Activated CD4-positive, alpha-beta T cell treated with anti-CD3 and anti-CD28 coated beads for 36 hours (primary cell): ENCODE measurements at regions of chr7 and their contacts with region 1.

Region 1: GRCh38 chr7:40232242-40232893 is 97.6 kb downstream of the SUGCT start:
- DNase-seq: peak; percentile 11
- ATAC-seq: no peak
- H3K4me3 Mint-ChIP-seq: no peak overlapping the region
- H3K27ac Mint-ChIP-seq: no peak overlapping the region
- H3K4me1 Mint-ChIP-seq: peaks cover 5% of the 10 kb centered on the region
- H3K27me3 Mint-ChIP-seq: no peaks in the 10 kb centered on the region

Region 2: GRCh38 chr7:39054731-39055130 is 1177.6 kb before region 1 on chr7:
- CTCF ChIA-PET with region 1: no interaction called
- POLR2A ChIA-PET with region 1: no interaction called
- intact Hi-C with region 1: no loop called
- DNase-seq: no peak
- ATAC-seq: no peak
- H3K4me3 Mint-ChIP-seq: no peak overlapping the region
- H3K27ac Mint-ChIP-seq: no peak overlapping the region
- H3K4me1 Mint-ChIP-seq: no peaks in the 10 kb centered on the region
- H3K27me3 Mint-ChIP-seq: peaks cover 5% of the 10 kb centered on the region

Region 3: GRCh38 chr7:40279991-40280390 is 47.6 kb after region 1 on chr7:
- CTCF ChIA-PET with region 1: interaction called, 3 read pairs
- POLR2A ChIA-PET with region 1: interaction called, 12 read pairs
- intact Hi-C with region 1: no loop called
- DNase-seq: no peak
- ATAC-seq: no peak
- H3K4me3 Mint-ChIP-seq: no peak overlapping the region
- H3K27ac Mint-ChIP-seq: no peak overlapping the region
- H3K4me1 Mint-ChIP-seq: no peaks in the 10 kb centered on the region
- H3K27me3 Mint-ChIP-seq: no peaks in the 10 kb centered on the region

Region 4: GRCh38 chr7:40311307-40311706 is 78.9 kb after region 1 on chr7:
- CTCF ChIA-PET with region 1: no interaction called
- POLR2A ChIA-PET with region 1: no interaction called
- intact Hi-C with region 1: no loop called
- DNase-seq: peak; percentile 6
- ATAC-seq: peak; percentile 76
- H3K4me3 Mint-ChIP-seq: no peak overlapping the region
- H3K27ac Mint-ChIP-seq: no peak overlapping the region
- H3K4me1 Mint-ChIP-seq: peaks cover 7% of the 10 kb centered on the region
- H3K27me3 Mint-ChIP-seq: no peaks in the 10 kb centered on the region

Region 5: DNA sequence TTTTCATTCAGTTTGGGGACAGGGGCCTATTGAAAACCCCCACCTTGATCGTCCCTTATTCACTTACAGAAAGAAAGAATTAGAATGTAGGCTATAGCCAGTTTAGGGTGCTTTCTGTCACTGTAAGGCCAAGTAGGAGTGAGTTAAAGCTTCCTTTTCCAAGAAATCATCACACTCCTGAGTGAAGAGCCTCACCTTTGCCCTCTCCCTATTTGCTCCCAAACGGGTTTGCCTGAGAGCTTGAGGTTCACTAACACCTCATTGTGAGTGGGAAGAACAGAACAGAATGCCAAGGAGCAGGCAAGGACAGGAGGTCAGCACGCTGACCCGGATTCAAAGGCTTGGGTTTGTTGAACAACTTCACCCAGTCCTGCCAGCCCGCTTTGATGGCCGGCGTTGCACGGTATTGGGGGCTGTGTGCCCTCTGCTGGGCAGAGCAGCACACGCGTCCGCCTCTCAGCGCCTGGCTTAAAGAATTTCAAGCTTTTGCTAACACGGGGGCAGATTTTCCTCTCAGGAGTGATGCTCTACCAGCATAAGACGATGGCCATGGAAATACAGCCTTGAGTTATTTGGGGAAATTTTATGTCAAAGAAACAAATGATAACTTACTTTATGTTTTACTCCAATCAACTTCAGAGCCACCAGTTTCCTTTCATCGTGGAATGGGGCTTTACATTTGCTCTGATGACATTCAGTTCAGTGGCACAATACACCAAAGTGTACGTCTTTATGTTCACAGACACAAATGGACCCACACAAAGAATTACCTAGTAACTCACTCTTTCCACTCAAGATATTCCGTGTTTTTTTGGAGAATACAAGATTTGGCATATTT is 372.5 kb after region 1 on chr7:
- CTCF ChIA-PET with region 1: interaction called, 6 read pairs
- POLR2A ChIA-PET with region 1: no interaction called
- intact Hi-C with region 1: loop called (anchors 1 to 5 kb)
- DNase-seq: peak; percentile 56
- ATAC-seq: peak; percentile 53
- H3K4me3 Mint-ChIP-seq: no peak overlapping the region
- H3K27ac Mint-ChIP-seq: no peak overlapping the region
- H3K4me1 Mint-ChIP-seq: peaks cover 3% of the 10 kb centered on the region
- H3K27me3 Mint-ChIP-seq: no peaks in the 10 kb centered on the region

Region 6: GRCh38 chr7:40658729-40659128 is 426.4 kb after region 1 on chr7:
- CTCF ChIA-PET with region 1: no interaction called
- POLR2A ChIA-PET with region 1: no interaction called
- intact Hi-C with region 1: no loop called
- DNase-seq: no peak
- ATAC-seq: no peak
- H3K4me3 Mint-ChIP-seq: no peak overlapping the region
- H3K27ac Mint-ChIP-seq: no peak overlapping the region
- H3K4me1 Mint-ChIP-seq: no peaks in the 10 kb centered on the region
- H3K27me3 Mint-ChIP-seq: no peaks in the 10 kb centered on the region

Region 7: GRCh38 chr7:41696314-41696916 is 1464.0 kb after region 1 on chr7:
- CTCF ChIA-PET with region 1: no interaction called
- POLR2A ChIA-PET with region 1: no interaction called
- intact Hi-C with region 1: loop called (anchors 5 to 10 kb)
- DNase-seq: peak; percentile 60
- ATAC-seq: no peak
- H3K4me3 Mint-ChIP-seq: no peak overlapping the region
- H3K27ac Mint-ChIP-seq: no peak overlapping the region
- H3K4me1 Mint-ChIP-seq: peaks cover 3% of the 10 kb centered on the region
- H3K27me3 Mint-ChIP-seq: peaks cover 36% of the 10 kb centered on the region

Region 8: DNA sequence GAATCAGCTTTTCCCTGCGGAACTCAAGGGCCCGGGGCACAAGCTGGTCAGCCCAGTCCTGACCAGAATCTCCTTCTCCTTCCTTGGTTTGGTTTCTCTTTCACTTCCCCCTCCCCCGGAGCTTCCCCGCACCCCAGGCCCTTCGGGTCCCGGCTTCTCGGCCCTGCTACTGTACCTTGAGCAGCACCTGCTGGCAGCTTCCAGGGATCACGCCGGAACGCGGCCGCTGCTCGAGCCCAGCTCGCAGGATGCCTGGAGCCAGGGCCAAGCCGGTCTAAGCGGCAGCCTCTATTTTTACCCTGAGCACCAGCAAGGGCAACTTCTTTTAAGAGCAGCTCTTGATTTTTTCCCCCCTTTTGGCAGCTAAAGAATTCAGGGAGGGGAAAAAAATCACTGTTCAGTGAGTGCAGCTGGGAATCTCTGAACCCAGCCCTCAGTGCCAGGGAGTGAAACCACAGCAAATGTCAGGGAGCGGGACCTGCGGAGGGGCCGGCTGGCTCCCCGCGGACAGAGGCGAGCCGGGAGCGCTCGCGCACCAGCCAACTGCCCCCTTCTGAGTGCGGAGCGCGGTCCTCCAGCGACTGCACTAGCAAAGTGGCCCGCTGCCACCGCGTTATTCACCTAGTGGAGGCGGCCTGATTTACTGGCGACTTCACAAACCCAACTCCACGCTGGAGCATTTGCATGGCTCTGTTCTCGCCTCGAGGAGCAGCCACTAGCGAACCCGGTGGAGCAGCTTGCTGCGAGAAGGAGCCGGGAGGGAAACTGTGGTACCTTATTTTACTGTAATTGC is 1472.9 kb after region 1 on chr7:
- CTCF ChIA-PET with region 1: interaction called, 3 read pairs
- POLR2A ChIA-PET with region 1: no interaction called
- intact Hi-C with region 1: loop called in 1 of 2 experiments (anchors 10 kb)
- DNase-seq: peak; percentile 81
- ATAC-seq: peak; percentile 93
- H3K4me3 Mint-ChIP-seq: peak overlapping the region; percentile 52
- H3K27ac Mint-ChIP-seq: no peak overlapping the region
- H3K4me1 Mint-ChIP-seq: peaks cover 12% of the 10 kb centered on the region
- H3K27me3 Mint-ChIP-seq: peaks cover 36% of the 10 kb centered on the region